CD8-positive, alpha-beta T cell (primary cell): ENCODE measurements at regions of chr12 and their contacts with region 1.

Region 1: GRCh38 chr12:9741726-9742125 is 8.8 kb upstream of the CLECL1 start:
- DNase-seq: peak; percentile 44 to 95 (median 67)
- ATAC-seq: peak; percentile 59
- H3K4me3 ChIP-seq: peak overlapping the region; percentile 13 to 19
- H3K4me3 Mint-ChIP-seq: peak overlapping the region; percentile 77
- H3K27ac ChIP-seq: peak overlapping the region; percentile 63 to 68
- H3K27ac Mint-ChIP-seq: peak overlapping the region; percentile 97
- H3K4me1 ChIP-seq: peaks cover 60% of the 10 kb centered on the region
- H3K4me1 Mint-ChIP-seq: peaks cover 67% of the 10 kb centered on the region
- H3K27me3 ChIP-seq: no peaks in the 10 kb centered on the region
- H3K27me3 Mint-ChIP-seq: no peaks in the 10 kb centered on the region
- CTCF ChIP-seq: no peak

Region 2: DNA sequence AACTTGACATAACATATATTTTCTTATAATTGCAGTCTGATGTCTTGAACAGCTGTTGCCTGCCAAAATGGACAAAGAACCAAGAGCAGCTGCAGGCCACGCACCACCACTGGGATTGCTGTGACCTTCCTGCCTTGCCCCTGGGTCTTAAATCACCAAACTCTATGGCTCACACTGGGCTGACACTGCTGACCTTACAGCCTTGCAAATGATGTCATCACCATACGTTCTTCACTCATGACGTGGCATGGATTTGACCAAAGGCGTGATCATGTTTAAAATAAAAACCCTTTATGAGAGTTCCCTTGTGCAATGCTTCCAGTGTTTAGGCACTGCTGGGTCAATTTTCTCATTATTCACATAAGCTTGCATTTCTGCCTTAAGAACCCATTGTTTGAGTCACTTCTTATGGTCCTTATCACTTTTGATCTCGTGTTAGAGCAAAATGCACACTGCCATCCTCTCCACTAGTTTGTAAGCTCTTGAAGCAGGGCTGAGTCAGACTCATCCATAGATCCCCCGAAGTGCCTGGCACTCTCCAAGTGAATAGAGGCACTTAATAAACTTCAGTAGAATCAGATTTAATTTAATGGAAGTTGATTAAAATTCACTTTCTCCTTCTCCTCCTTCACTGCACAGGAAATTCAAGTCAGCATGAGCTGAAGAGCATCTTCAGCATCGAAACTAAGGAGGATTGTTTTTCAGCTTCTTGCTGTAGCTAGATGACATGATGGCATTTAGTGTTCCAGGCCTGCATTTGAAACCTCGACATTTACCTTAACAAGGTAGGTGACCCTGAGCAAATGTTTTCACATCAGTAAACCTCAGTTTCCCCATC is 401.1 kb before region 1 on chr12:
- CTCF ChIA-PET with region 1: no interaction called
- POLR2A ChIA-PET with region 1: no interaction called
- intact Hi-C with region 1: no loop called
- DNase-seq: peak in 1 of 9 experiments; percentile 24
- ATAC-seq: peak; percentile 26
- H3K4me3 ChIP-seq: no peak overlapping the region
- H3K4me3 Mint-ChIP-seq: no peak overlapping the region
- H3K27ac ChIP-seq: peak overlapping the region in 1 of 2 experiments; percentile 38
- H3K27ac Mint-ChIP-seq: peak overlapping the region; percentile 37
- H3K4me1 ChIP-seq: peaks cover 34% of the 10 kb centered on the region
- H3K4me1 Mint-ChIP-seq: peaks cover 35% of the 10 kb centered on the region
- H3K27me3 ChIP-seq: no peaks in the 10 kb centered on the region
- H3K27me3 Mint-ChIP-seq: no peaks in the 10 kb centered on the region
- CTCF ChIP-seq: no peak

Region 3: GRCh38 chr12:9702255-9702654 is 39.5 kb before region 1 on chr12:
- CTCF ChIA-PET with region 1: interaction called, 32 read pairs
- POLR2A ChIA-PET with region 1: interaction called, 3 read pairs
- intact Hi-C with region 1: loop called in 1 of 2 experiments (anchors 5 kb)
- DNase-seq: peak in 8 of 9 experiments; percentile 41 to 82 (median 58)
- ATAC-seq: peak; percentile 72
- H3K4me3 ChIP-seq: peak overlapping the region; percentile 20 to 22
- H3K4me3 Mint-ChIP-seq: peak overlapping the region; percentile 56
- H3K27ac ChIP-seq: peak overlapping the region; percentile 47 to 78
- H3K27ac Mint-ChIP-seq: peak overlapping the region; percentile 94
- H3K4me1 ChIP-seq: peaks cover 46% of the 10 kb centered on the region
- H3K4me1 Mint-ChIP-seq: peaks cover 79% of the 10 kb centered on the region
- H3K27me3 ChIP-seq: no peaks in the 10 kb centered on the region
- H3K27me3 Mint-ChIP-seq: no peaks in the 10 kb centered on the region
- CTCF ChIP-seq: no peak

Region 4: DNA sequence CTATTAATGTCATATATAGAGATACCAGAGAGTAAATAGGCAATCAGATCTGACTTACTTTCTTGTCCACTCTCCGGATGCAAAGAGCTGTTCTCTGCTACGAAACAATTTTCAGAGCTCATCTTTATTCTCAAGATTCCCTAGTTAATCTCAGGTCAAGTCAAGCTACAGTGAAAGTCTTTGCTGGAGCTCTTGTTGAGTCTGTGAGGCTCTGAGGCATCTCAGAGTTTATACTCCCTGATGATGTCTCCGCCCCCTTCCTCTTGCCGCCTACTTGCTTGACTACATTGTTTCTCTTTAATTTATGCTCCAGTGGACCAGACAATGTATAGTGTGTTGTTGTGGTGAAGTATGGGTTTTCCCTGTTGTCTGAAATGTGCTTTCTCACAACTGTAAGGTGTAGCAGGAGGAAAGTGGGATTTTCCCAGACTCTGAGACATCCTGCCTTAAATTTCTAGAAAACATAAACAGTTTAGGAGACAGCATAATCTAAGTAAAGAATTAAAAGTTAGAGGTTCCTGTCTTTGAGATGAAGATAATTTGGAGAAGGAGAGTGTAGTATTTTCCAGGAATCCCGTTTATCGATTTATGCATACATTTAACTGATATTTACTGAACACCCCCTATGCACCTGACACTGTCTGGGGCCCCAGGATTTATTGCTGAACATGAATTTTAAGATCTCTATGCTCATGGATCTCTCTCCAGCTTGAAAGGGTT is 19.1 kb after region 1 on chr12 and contains the start of gene CD69:
- CTCF ChIA-PET with region 1: interaction called, 74 read pairs
- POLR2A ChIA-PET with region 1: interaction called, 19 read pairs
- intact Hi-C with region 1: loop called in 1 of 2 experiments (anchors 1 kb)
- DNase-seq: peak; percentile 60 to 96 (median 77)
- ATAC-seq: peak; percentile 53
- H3K4me3 ChIP-seq: peak within 1 kb of the TSS; percentile 79
- H3K4me3 Mint-ChIP-seq: peak within 1 kb of the TSS; percentile 100
- H3K27ac ChIP-seq: peak within 1 kb of the TSS; percentile 97 to 98
- H3K27ac Mint-ChIP-seq: peak within 1 kb of the TSS; percentile 96
- H3K4me1 ChIP-seq: peaks cover 51% of the 10 kb centered on the region
- H3K4me1 Mint-ChIP-seq: peaks cover 64% of the 10 kb centered on the region
- H3K27me3 ChIP-seq: no peaks in the 10 kb centered on the region
- H3K27me3 Mint-ChIP-seq: no peaks in the 10 kb centered on the region
- CTCF ChIP-seq: no peak
- total RNA-seq, gene CD69: 502 to 504 TPM

Region 5: GRCh38 chr12:9797722-9798619 is 56.2 kb after region 1 on chr12:
- CTCF ChIA-PET with region 1: interaction called, 483 read pairs
- POLR2A ChIA-PET with region 1: interaction called, 6 read pairs
- intact Hi-C with region 1: no loop called
- DNase-seq: peak; percentile 37 to 91 (median 67)
- ATAC-seq: peak; percentile 95
- H3K4me3 ChIP-seq: no peak overlapping the region
- H3K4me3 Mint-ChIP-seq: no peak overlapping the region
- H3K27ac ChIP-seq: no peak overlapping the region
- H3K27ac Mint-ChIP-seq: peak overlapping the region; percentile 46
- H3K4me1 ChIP-seq: peaks cover 49% of the 10 kb centered on the region
- H3K4me1 Mint-ChIP-seq: peaks cover 45% of the 10 kb centered on the region
- H3K27me3 ChIP-seq: no peaks in the 10 kb centered on the region
- H3K27me3 Mint-ChIP-seq: no peaks in the 10 kb centered on the region
- CTCF ChIP-seq: peak; percentile 86

Region 6: GRCh38 chr12:9843416-9843815 is 101.7 kb after region 1 on chr12:
- CTCF ChIA-PET with region 1: no interaction called
- POLR2A ChIA-PET with region 1: no interaction called
- intact Hi-C with region 1: no loop called
- DNase-seq: no peak
- ATAC-seq: no peak
- H3K4me3 ChIP-seq: no peak overlapping the region
- H3K4me3 Mint-ChIP-seq: no peak overlapping the region
- H3K27ac ChIP-seq: no peak overlapping the region
- H3K27ac Mint-ChIP-seq: no peak overlapping the region
- H3K4me1 ChIP-seq: no peaks in the 10 kb centered on the region
- H3K4me1 Mint-ChIP-seq: no peaks in the 10 kb centered on the region
- H3K27me3 ChIP-seq: no peaks in the 10 kb centered on the region
- H3K27me3 Mint-ChIP-seq: no peaks in the 10 kb centered on the region
- CTCF ChIP-seq: no peak

Region 7: DNA sequence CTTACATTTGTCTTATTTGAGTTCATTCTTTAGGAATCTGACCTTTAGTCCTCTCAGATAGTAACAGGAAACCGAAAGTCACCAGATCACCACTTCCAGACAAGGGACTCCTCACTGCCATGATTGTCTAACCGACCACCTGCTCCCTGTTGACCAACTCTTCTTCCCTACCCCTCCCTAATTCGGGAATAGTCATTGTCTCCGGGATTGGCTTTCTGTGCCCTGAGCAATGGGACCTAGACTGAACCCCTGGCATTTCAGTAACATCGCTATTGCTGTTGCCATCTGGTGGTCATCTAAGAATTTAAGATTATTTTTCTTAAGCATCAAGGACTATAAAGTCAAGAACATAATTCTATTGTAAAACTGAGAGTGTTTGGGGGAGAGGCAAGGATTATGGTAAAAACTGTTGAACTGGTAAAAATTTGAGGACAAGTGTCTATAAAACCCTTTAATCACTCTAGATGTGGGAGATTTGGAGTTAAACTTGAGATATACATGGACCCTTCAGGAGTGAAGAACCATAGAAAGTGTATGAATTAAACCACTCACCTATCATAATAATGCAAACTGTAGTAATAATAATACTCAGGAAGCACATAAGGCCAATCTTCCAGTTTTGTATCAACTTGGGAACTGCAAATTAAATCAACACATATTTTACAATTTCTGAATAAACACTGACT is 184.1 kb after region 1 on chr12:
- CTCF ChIA-PET with region 1: interaction called, 63 read pairs
- POLR2A ChIA-PET with region 1: no interaction called
- intact Hi-C with region 1: no loop called
- DNase-seq: peak in 6 of 9 experiments; percentile 5 to 74 (median 44)
- ATAC-seq: peak; percentile 59
- H3K4me3 ChIP-seq: peak overlapping the region; percentile 21 to 28
- H3K4me3 Mint-ChIP-seq: peak overlapping the region; percentile 77
- H3K27ac ChIP-seq: no peak overlapping the region
- H3K27ac Mint-ChIP-seq: peak overlapping the region; percentile 18
- H3K4me1 ChIP-seq: no peaks in the 10 kb centered on the region
- H3K4me1 Mint-ChIP-seq: peaks cover 12% of the 10 kb centered on the region
- H3K27me3 ChIP-seq: peaks cover 0 to 2% of the 10 kb centered on the region in 2 experiments
- H3K27me3 Mint-ChIP-seq: no peaks in the 10 kb centered on the region
- CTCF ChIP-seq: peak; percentile 62

Region 8: GRCh38 chr12:10293570-10294227 is 552.0 kb after region 1 on chr12:
- CTCF ChIA-PET with region 1: no interaction called
- POLR2A ChIA-PET with region 1: no interaction called
- intact Hi-C with region 1: no loop called
- DNase-seq: peak in 4 of 9 experiments; percentile 12 to 91 (median 66)
- ATAC-seq: peak; percentile 91
- H3K4me3 ChIP-seq: no peak overlapping the region
- H3K4me3 Mint-ChIP-seq: peak overlapping the region; percentile 16
- H3K27ac ChIP-seq: peak overlapping the region; percentile 7 to 60
- H3K27ac Mint-ChIP-seq: peak overlapping the region; percentile 77
- H3K4me1 ChIP-seq: peaks cover 34% of the 10 kb centered on the region
- H3K4me1 Mint-ChIP-seq: peaks cover 50% of the 10 kb centered on the region
- H3K27me3 ChIP-seq: no peaks in the 10 kb centered on the region
- H3K27me3 Mint-ChIP-seq: no peaks in the 10 kb centered on the region
- CTCF ChIP-seq: no peak